ENCODE measurements at regions of chr11 and their contacts with region 1.

Region 1: DNA sequence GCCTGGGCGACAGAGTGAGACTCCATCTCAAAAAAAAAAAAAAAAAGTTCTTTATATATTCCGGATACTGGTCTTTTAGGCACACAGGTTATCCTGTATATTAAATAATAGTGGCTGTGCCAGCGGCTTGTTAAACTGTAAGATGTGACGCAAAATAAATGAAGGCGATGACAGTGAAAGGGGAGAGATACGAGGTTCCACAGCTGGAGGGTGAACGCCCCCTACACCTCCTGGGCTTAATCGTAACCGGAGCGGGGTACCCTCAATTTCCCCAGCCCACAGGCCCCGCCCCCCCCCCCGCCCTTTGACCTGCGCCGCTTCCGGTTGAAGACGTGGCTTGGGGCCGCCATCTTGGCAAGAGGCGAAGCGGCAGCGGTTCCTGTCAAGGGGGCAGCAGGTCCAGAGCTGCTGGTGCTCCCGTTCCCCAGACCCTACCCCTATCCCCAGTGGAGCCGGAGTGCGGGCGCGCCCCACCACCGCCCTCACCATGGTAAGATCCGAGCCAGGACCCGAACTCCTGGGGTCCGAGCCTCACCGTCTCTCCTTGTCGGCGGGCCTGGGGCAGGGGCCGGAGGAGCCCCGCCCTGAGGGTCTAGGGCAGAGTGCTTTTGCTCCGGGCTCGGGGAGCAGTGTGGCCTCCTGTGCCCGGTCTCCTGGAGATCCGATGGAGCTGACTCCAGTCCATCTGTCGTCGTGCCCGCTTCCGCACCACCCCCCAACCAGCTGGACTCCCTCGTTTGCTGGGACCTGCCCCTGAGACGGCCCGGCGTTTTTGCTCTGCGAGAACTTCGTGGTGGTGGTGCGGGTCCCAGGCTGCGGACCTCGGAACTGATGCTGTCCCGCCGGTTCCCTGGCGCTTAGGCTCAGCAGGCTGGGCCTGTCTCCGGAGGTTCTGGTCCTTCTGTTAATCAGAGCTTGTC is at the start of gene ARCN1:
- DNase-seq: peak; percentile 64 to 91 (median 75)
- ATAC-seq: peak; percentile 81
- H3K4me3 ChIP-seq: peak within 1 kb of the TSS; percentile 88
- H3K4me3 Mint-ChIP-seq: peak within 1 kb of the TSS; percentile 99
- H3K27ac ChIP-seq: peak within 1 kb of the TSS; percentile 97 to 98
- H3K27ac Mint-ChIP-seq: peak within 1 kb of the TSS; percentile 94
- H3K4me1 ChIP-seq: peaks cover 20% of the 10 kb centered on the region
- H3K4me1 Mint-ChIP-seq: peaks cover 52% of the 10 kb centered on the region
- H3K27me3 ChIP-seq: no peaks in the 10 kb centered on the region
- H3K27me3 Mint-ChIP-seq: no peaks in the 10 kb centered on the region
- CTCF ChIP-seq: no peak
- total RNA-seq, gene ARCN1: 73.7 to 78.6 TPM

Region 2: GRCh38 chr11:118530408-118531339 is 41.6 kb before region 1 on chr11 and contains the start of gene TMEM25:
- CTCF ChIA-PET with region 1: no interaction called
- POLR2A ChIA-PET with region 1: interaction called, 13 read pairs
- intact Hi-C with region 1: loop called (anchors 2 to 5 kb)
- DNase-seq: peak; percentile 54 to 82 (median 70)
- ATAC-seq: peak; percentile 84
- H3K4me3 ChIP-seq: peak within 1 kb of the TSS; percentile 73
- H3K4me3 Mint-ChIP-seq: peak within 1 kb of the TSS; percentile 96
- H3K27ac ChIP-seq: peak within 1 kb of the TSS in 1 of 2 donors; percentile 30
- H3K27ac Mint-ChIP-seq: peak within 1 kb of the TSS; percentile 97
- H3K4me1 ChIP-seq: peaks cover 29% of the 10 kb centered on the region
- H3K4me1 Mint-ChIP-seq: peaks cover 47% of the 10 kb centered on the region
- H3K27me3 ChIP-seq: no peaks in the 10 kb centered on the region
- H3K27me3 Mint-ChIP-seq: no peaks in the 10 kb centered on the region
- CTCF ChIP-seq: no peak
- total RNA-seq, gene TMEM25: 18.3 to 18.5 TPM

Region 3: DNA sequence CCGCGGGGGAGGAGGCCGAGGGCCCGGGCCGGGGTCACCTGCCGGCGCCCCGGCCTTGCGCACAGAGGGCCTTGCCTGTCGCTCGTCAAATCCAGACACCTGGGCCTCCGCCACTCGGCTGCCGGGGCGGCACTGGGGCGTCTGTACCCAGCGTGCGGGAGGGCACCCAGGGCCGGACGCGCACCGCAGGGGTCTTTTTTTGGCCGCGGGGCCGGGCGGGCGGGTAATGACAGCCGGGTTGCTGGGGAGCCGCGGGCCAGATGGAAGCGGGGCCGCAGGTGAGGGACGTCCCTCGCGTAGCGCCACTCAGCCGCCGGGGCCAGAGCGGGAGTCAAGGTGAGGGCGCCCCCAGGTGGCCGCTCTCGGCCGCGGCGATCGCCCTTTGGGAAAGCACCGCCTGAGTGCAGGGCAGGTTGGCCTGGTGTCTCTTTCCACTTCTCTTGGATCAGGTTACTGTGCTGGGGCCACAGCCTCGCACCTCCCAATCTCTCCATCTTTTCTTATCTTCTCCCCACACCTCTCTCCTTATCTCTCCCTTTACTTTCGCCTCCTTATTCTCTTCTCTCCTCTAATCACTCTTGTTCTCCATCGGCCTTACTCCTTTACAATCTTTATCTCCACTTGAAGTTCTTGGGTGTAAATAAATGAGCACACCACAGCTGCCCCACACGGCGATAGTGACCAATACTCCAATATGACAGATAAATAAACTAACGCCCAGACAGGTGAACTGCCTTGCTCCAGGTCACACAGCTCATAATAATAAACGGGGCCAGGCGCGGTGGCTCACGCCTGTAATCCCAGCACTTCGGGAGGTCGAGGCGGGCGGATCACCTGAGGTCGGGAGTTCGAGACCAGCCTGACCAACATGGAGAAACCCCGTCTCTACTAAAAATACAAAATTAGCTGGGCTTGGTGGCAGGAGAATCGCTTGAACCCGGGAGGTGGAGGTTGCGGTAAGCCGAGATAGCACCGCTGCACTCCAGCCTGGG is 38.8 kb after region 1 on chr11:
- CTCF ChIA-PET with region 1: interaction called, 3 read pairs
- POLR2A ChIA-PET with region 1: interaction called, 18 read pairs
- intact Hi-C with region 1: loop called (anchors 1 to 5 kb)
- DNase-seq: peak; percentile 74 to 93 (median 82)
- ATAC-seq: peak; percentile 35
- H3K4me3 ChIP-seq: peak overlapping the region; percentile 47
- H3K4me3 Mint-ChIP-seq: peak overlapping the region; percentile 85
- H3K27ac ChIP-seq: no peak overlapping the region
- H3K27ac Mint-ChIP-seq: peak overlapping the region; percentile 43
- H3K4me1 ChIP-seq: peaks cover 44% of the 10 kb centered on the region
- H3K4me1 Mint-ChIP-seq: peaks cover 24% of the 10 kb centered on the region
- H3K27me3 ChIP-seq: peaks cover 0 to 9% of the 10 kb centered on the region in 2 experiments
- H3K27me3 Mint-ChIP-seq: peaks cover 25% of the 10 kb centered on the region
- CTCF ChIP-seq: peak; percentile 96

Region 4: DNA sequence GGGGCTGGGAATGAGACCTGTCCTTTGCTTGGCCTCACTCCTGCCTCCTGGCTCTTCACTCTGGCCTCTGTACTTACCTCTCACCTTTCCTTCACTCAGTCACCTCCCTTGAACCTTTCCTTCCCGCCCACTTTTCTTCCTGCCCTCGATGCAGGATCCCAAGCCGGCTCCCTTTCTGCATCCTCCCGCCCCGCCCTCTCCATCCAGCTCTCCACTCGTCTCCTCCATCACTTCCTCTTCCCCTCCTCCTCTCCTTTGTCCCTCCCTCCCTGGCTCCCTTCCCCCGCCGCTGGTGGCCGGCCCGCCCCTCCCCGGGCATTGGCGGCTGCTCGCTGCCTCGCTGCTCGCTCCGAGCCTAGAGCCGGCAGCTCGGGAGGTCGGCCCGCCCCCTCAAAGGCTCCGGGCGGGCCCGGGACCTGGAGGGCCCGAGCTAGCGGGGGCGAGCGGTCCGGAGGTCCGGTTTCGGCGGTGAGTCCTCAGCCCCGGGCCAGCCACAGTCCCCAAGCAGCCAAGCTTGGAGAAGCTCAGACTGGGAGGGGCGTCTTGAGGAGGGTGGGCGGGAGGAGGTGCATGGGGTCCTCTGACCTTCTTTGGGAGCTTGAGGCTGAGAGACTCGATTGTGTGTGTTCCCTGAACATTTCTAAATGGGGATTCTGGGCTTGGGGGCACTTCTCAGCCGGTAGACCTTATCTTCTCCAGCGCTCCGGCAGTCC is 48.9 kb after region 1 on chr11:
- CTCF ChIA-PET with region 1: no interaction called
- POLR2A ChIA-PET with region 1: no interaction called
- intact Hi-C with region 1: no loop called
- DNase-seq: peak in 6 of 14 experiments; percentile 9 to 29 (median 17)
- ATAC-seq: peak; percentile 64
- H3K4me3 ChIP-seq: no peak overlapping the region
- H3K4me3 Mint-ChIP-seq: peak overlapping the region; percentile 54
- H3K27ac ChIP-seq: no peak overlapping the region
- H3K27ac Mint-ChIP-seq: no peak overlapping the region
- H3K4me1 ChIP-seq: peaks cover 13% of the 10 kb centered on the region
- H3K4me1 Mint-ChIP-seq: peaks cover 5% of the 10 kb centered on the region
- H3K27me3 ChIP-seq: peaks cover 9 to 10% of the 10 kb centered on the region in 2 experiments
- H3K27me3 Mint-ChIP-seq: peaks cover 20% of the 10 kb centered on the region
- CTCF ChIP-seq: no peak

Region 5: GRCh38 chr11:118878163-118878563 is 305.8 kb after region 1 on chr11:
- CTCF ChIA-PET with region 1: no interaction called
- POLR2A ChIA-PET with region 1: no interaction called
- intact Hi-C with region 1: no loop called
- DNase-seq: peak in 7 of 14 experiments; percentile 35 to 79 (median 50)
- ATAC-seq: peak; percentile 28
- H3K4me3 ChIP-seq: no peak overlapping the region
- H3K4me3 Mint-ChIP-seq: peak overlapping the region; percentile 84
- H3K27ac ChIP-seq: peak overlapping the region; percentile 83 to 90
- H3K27ac Mint-ChIP-seq: peak overlapping the region; percentile 95
- H3K4me1 ChIP-seq: peaks cover 95% of the 10 kb centered on the region
- H3K4me1 Mint-ChIP-seq: peaks cover 92% of the 10 kb centered on the region
- H3K27me3 ChIP-seq: no peaks in the 10 kb centered on the region
- H3K27me3 Mint-ChIP-seq: no peaks in the 10 kb centered on the region
- CTCF ChIP-seq: no peak

Region 6: GRCh38 chr11:118953265-118953664 is 380.9 kb after region 1 on chr11:
- CTCF ChIA-PET with region 1: no interaction called
- POLR2A ChIA-PET with region 1: no interaction called
- intact Hi-C with region 1: no loop called
- DNase-seq: no peak
- ATAC-seq: no peak
- H3K4me3 ChIP-seq: no peak overlapping the region
- H3K4me3 Mint-ChIP-seq: no peak overlapping the region
- H3K27ac ChIP-seq: no peak overlapping the region
- H3K27ac Mint-ChIP-seq: no peak overlapping the region
- H3K4me1 ChIP-seq: peaks cover 8% of the 10 kb centered on the region
- H3K4me1 Mint-ChIP-seq: no peaks in the 10 kb centered on the region
- H3K27me3 ChIP-seq: no peaks in the 10 kb centered on the region
- H3K27me3 Mint-ChIP-seq: peaks cover 5% of the 10 kb centered on the region
- CTCF ChIP-seq: no peak

Measured in CD4-positive, alpha-beta T cell (primary cell).